OCI-LY7 (cell line): ENCODE measurements at regions of chr18 and their contacts with region 1.

Region 1: GRCh38 chr18:3447895-3448837 is 1.8 kb upstream of the TGIF1 start:
- DNase-seq: peak; percentile 88
- H3K4me3 ChIP-seq: peak overlapping the region; percentile 88
- H3K27ac ChIP-seq: peak overlapping the region; percentile 96
- H3K4me1 ChIP-seq: peaks cover 22% of the 10 kb centered on the region
- CTCF ChIP-seq: no peak

Region 2: GRCh38 chr18:3012964-3013804 is 435.0 kb before region 1 on chr18 and contains the start of gene LPIN2:
- CTCF ChIA-PET with region 1: no interaction called
- POLR2A ChIA-PET with region 1: no interaction called
- intact Hi-C with region 1: loop called (anchors 10 kb)
- DNase-seq: peak; percentile 98
- H3K4me3 ChIP-seq: peak within 1 kb of the TSS; percentile 72
- H3K27ac ChIP-seq: peak within 1 kb of the TSS; percentile 50
- H3K4me1 ChIP-seq: peaks cover 51% of the 10 kb centered on the region
- CTCF ChIP-seq: no peak
- total RNA-seq, gene LPIN2: 18.7 and 20.1 TPM in 2 replicates

Region 3: GRCh38 chr18:3177902-3178687 is 270.1 kb before region 1 on chr18:
- CTCF ChIA-PET with region 1: no interaction called
- POLR2A ChIA-PET with region 1: interaction called, 4 read pairs
- intact Hi-C with region 1: loop called (anchors 5 kb)
- DNase-seq: peak; percentile 90
- H3K4me3 ChIP-seq: peak overlapping the region; percentile 20
- H3K27ac ChIP-seq: peak overlapping the region; percentile 91
- H3K4me1 ChIP-seq: peaks cover 53% of the 10 kb centered on the region
- CTCF ChIP-seq: no peak

Region 4: DNA sequence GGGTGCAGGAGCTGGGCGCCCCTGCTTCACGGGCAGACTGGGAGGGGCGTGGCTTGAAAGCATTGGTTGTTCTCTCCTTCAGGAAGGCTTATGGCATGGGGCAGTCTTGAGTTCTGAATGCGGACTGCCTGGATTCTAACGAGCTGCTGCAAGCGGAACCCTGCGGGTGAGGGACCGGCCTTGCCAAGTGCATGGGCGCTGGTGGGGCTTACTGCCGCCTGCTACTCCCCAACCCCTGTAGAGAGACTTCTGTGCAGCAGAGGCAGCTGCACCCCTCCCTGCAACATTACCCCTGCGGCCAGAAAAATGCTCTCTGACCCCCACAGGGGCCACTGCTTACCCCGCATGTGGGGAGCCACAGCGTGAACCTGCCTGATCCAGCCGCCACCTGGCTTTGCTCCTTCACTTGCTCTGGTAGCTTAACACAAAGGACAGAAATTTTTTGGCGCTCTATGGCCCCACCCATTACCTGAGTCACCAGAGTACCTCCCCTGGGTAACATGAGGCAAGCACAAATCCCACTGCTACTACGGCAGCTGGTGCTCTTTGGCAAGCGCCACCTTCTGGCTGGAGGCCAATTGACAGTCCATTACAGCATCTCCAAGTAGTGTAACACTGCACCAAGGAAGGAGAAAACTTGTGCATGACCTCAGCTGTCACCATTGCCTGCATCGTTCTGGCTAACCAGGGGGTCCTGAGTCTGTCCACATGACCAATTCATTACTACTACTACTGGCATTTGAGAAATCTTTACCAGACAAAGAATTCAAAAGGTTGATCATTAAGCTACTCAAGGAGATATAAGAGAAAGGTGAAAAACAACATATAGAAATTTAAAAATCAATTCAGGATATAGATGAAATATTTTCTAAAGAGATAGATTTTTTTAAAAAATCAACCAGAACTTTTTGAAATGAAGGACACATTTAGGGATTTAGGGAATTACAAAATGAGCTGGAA is 150.9 kb before region 1 on chr18:
- CTCF ChIA-PET with region 1: no interaction called
- POLR2A ChIA-PET with region 1: interaction called, 10 read pairs
- intact Hi-C with region 1: loop called (anchors 2 kb)
- DNase-seq: peak; percentile 97
- H3K4me3 ChIP-seq: peak overlapping the region; percentile 85
- H3K27ac ChIP-seq: peak overlapping the region; percentile 57
- H3K4me1 ChIP-seq: peaks cover 10% of the 10 kb centered on the region
- CTCF ChIP-seq: peak; percentile 98

Region 5: DNA sequence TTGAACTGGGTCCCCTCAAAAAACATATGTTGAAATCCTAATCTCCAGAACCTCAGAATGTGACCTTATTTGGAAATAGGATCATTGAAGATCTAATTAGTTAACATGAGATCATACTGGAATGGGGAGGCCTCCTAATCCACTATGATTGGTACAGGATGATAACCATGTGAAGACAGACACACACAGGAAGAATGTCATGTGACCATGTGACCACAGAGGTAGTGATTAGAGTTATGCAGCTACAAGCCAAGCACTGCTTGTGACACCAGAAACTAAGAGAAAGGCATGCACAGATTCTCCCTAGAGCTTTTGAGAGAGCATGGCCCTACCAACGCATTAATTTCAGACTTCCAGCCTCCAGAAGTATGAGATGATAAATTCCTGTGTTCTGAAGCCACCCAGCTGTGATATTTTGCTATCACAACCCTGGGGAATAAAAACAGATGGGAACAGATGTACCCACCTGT is 45.1 kb before region 1 on chr18:
- CTCF ChIA-PET with region 1: no interaction called
- POLR2A ChIA-PET with region 1: interaction called, 5 read pairs
- intact Hi-C with region 1: loop called (anchors 1 kb)
- DNase-seq: peak; percentile 68
- H3K4me3 ChIP-seq: peak overlapping the region; percentile 19
- H3K27ac ChIP-seq: peak overlapping the region; percentile 84
- H3K4me1 ChIP-seq: peaks cover 44% of the 10 kb centered on the region
- CTCF ChIP-seq: no peak

Region 6: DNA sequence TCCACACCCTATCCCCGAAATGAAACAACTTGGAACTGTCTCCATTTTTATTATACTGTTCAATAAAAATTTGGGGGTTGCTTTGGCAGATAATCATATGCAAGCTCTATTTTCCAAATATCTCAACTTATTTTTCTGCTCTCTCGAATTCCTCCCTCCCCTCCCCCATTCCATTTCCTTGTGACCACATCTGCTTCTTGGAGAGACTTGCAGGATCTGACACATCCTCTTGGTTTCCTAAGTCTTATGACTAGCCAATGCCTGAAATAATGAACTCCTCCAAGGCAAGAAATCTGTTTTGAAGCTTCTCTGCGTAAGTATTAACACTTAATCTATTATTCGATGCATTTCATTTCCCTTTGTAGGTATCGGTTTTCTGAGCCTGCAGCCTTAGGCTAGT is 17.9 kb after region 1 on chr18:
- CTCF ChIA-PET with region 1: no interaction called
- POLR2A ChIA-PET with region 1: interaction called, 29 read pairs
- intact Hi-C with region 1: no loop called
- DNase-seq: no peak
- H3K4me3 ChIP-seq: no peak overlapping the region
- H3K27ac ChIP-seq: no peak overlapping the region
- H3K4me1 ChIP-seq: peaks cover 16% of the 10 kb centered on the region
- CTCF ChIP-seq: no peak

Region 7: GRCh38 chr18:3560755-3561154 is 112.6 kb after region 1 on chr18:
- CTCF ChIA-PET with region 1: no interaction called
- POLR2A ChIA-PET with region 1: no interaction called
- intact Hi-C with region 1: no loop called
- DNase-seq: no peak
- H3K4me3 ChIP-seq: no peak overlapping the region
- H3K27ac ChIP-seq: no peak overlapping the region
- H3K4me1 ChIP-seq: peaks cover 12% of the 10 kb centered on the region
- CTCF ChIP-seq: no peak

Region 8: GRCh38 chr18:3593904-3594661 is 145.9 kb after region 1 on chr18:
- CTCF ChIA-PET with region 1: no interaction called
- POLR2A ChIA-PET with region 1: interaction called, 9 read pairs
- intact Hi-C with region 1: loop called (anchors 1 kb)
- DNase-seq: peak; percentile 97
- H3K4me3 ChIP-seq: peak overlapping the region; percentile 79
- H3K27ac ChIP-seq: peak overlapping the region; percentile 95
- H3K4me1 ChIP-seq: peaks cover 80% of the 10 kb centered on the region
- CTCF ChIP-seq: peak; percentile 79